GM18951 (cell line): ENCODE measurements at regions of chr14 and their contacts with region 1.

Region 1: DNA sequence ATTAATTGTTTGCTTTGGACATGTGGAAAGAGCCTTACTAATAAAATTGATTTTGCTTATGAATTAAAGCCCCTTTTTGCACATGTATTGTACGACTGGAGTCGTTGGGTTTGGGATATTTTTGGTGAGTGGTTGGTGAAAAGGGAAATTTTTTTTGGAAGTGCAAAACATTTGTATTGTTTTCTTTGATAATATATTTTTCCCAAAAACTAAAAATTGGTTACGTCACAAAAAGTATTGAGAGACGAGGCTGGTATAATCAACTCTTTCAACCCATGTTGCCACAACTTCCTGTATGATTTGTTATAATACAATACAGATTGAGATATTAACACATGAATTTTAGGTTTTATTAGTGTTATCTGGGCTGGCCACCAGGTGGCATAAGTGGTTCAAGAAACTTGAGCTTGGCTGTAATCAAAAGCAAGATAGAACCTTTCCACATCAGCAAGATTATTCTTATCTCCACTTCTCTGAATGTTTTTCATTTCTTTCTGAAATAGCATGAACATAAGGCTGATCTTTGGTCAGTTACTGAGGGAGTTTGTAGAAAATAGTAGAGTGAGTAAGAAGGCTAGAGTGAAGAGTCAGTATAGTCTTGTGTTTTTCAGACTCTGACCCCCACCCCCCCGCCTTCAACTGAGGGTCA is 8.7 kb downstream of the NGDN start:
- POLR2A ChIP-seq: no peak

Region 2: GRCh38 chr14:23399591-23399990 is 78.6 kb before region 1 on chr14:
- in situ Hi-C with region 1: no loop called
- POLR2A ChIP-seq: no peak

Region 3: DNA sequence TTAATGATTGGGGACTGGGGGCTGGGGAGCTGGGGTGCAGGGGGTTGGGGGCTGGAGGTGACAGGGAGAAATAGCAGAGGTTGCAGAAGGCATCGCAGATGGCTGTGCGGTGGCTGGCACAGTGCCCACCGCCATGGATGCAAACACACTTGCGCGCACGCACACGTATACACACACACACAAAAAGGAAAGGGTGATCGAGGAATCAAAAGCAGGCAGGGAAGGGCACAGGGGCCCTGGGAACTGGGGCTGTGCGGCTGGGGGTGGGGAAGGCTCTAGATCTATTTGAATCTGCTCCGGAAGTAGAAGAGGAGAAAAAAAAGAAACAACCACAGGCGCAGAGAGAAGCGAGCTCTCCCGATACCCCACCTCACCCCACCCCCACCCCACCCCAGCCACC is 33.9 kb after region 1 on chr14:
- in situ Hi-C with region 1: no loop called
- POLR2A ChIP-seq: no peak

Region 4: DNA sequence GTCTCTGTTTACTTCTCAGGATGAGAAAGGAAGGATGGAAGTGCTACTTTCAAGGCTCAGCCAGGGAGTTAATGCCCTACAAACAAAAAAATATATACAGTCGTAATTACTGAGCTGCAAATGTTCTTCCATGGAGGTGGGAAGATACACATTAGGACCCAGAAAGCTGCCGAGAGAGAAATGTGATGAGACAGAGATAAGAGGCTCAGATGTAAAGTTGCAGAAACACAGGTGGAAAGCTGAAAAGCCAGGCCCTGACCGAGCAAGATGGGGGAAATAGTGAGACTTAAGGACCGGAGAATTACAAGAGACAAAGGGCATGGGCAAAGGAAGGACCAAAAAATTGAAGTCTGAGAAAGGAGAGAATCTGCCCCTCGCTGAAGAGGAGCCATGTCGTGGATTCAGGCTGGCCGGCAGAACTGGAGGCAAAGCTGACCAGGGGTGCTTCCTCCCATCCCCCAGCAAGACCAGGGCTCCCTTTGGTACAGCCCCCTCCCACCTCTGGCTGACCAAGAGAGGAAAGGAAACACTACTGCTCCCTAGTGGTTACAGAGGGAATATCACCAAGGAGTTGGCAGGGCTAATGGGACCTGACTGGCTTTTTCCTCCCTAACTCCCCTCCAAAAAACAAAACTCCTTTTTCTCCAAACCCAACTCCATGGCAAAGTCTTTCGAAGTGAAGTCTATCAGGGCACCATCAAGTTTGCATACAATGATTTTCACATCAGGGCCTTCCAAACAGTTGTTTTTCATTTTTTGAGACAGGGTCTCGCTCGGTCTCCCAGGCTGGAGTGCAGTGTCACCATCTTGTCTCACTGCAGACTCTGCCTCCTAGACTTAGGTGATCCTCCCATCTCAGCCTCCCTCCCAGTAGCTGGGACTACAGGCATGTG is 61.3 kb after region 1 on chr14:
- in situ Hi-C with region 1: loop called (anchors 5 kb)
- POLR2A ChIP-seq: no peak